Activated naive CD4-positive, alpha-beta T cell treated with anti-CD3 and anti-CD28 coated beads, Interleukin-2, amount 10 ng/mL, durations not matched to agents 7 days and 5 days (primary cell): ENCODE measurements at regions of chr5 and their contacts with region 1.

Region 1: DNA sequence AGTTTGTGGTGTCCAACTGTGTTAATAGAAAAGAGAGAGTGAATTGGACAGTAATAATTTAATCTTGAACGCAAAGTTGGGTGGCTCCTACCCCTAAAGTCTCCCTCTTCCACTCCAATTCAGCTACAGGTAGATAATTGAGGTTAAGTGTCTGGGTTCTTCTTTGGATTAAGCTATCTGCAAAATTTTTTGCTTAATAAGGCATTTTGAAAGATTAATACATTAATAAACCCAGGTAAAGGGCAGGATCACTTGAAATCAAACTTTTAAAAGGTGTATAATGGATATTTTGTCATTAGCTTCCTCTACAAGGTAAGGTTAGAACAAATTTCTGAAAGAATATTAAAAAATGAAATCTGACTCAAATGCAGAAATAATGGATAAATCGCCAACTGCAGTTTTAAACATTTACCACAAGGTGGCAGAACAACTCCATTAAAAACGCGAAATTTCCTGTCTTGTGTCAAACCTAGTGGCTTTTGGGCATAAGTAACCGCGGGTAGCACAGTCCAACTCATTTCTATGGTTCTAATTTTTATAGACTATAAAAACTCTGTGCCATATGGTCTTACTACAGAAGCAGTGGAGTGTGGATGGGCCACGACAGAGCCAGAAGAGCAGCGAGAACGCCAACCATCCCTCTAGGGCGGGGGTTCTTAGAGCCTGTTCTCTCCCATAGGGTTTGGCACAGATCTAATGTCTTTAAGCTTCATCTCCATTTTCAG is 276.5 kb downstream of the ARHGEF28 start:
- DNase-seq: no peak
- H3K4me3 Mint-ChIP-seq: no peak overlapping the region
- H3K27ac Mint-ChIP-seq: no peak overlapping the region
- H3K4me1 Mint-ChIP-seq: no peaks in the 10 kb centered on the region
- H3K27me3 Mint-ChIP-seq: peaks cover 18% of the 10 kb centered on the region

Region 2: DNA sequence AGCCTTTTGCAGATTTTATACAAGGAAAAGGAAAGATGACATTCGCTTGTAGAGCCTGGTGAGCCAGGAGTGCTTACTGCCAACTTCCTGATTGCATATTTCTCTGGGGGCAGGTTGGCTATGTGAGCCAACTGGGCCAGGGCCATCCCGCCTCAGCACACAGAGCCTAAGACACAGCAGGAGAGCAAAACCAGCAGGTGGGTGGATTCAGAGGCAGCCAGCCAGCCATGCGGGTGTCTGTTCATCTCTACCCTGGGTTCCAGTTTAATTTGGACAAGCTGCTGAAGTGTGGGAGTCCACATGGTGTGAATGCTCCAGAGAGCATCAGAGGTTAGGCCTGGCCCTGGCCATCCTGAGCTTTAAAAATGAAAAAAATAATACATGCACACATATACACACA is 14.9 kb after region 1 on chr5:
- CTCF ChIA-PET with region 1: no interaction called
- DNase-seq: no peak
- H3K4me3 Mint-ChIP-seq: no peak overlapping the region
- H3K27ac Mint-ChIP-seq: no peak overlapping the region
- H3K4me1 Mint-ChIP-seq: no peaks in the 10 kb centered on the region
- H3K27me3 Mint-ChIP-seq: no peaks in the 10 kb centered on the region

Region 3: GRCh38 chr5:74640450-74640953 is 738.0 kb after region 1 on chr5 and contains the start of gene ENC1:
- CTCF ChIA-PET with region 1: interaction called, 21 read pairs
- DNase-seq: peak; percentile 89
- H3K4me3 Mint-ChIP-seq: peak within 1 kb of the TSS; percentile 78
- H3K27ac Mint-ChIP-seq: peak within 1 kb of the TSS; percentile 83
- H3K4me1 Mint-ChIP-seq: peaks cover 32% of the 10 kb centered on the region
- H3K27me3 Mint-ChIP-seq: peaks cover 55% of the 10 kb centered on the region

Region 4: GRCh38 chr5:74648835-74649293 is 746.4 kb after region 1 on chr5:
- CTCF ChIA-PET with region 1: interaction called, 30 read pairs
- DNase-seq: peak; percentile 50
- H3K4me3 Mint-ChIP-seq: no peak overlapping the region
- H3K27ac Mint-ChIP-seq: no peak overlapping the region
- H3K4me1 Mint-ChIP-seq: no peaks in the 10 kb centered on the region
- H3K27me3 Mint-ChIP-seq: peaks cover 17% of the 10 kb centered on the region